K562 (cell line): ENCODE measurements at regions of chr10 and their contacts with region 1.

Region 1: GRCh38 chr10:71893920-71894319 is 42.9 kb upstream of the PSAP start:
- DNase-seq: peak; percentile 54 to 94 (median 73)
- ATAC-seq: peak; percentile 94
- H3K4me3 ChIP-seq: no peak overlapping the region
- H3K27ac ChIP-seq: no peak overlapping the region
- H3K4me1 ChIP-seq: peaks cover 21 to 28% of the 10 kb centered on the region in 2 experiments
- H3K27me3 ChIP-seq: no peaks in the 10 kb centered on the region
- CTCF ChIP-seq: no peak
- EP300 ChIP-seq: peak; percentile 91
- POLR2A ChIP-seq: no peak
- RAD21 ChIP-seq: peak in 1 of 2 experiments; percentile 39; a peak in 2 of 4 replicates

Region 2: GRCh38 chr10:71319042-71319799 is 574.7 kb before region 1 on chr10 and contains the start of gene SLC29A3:
- CTCF ChIA-PET with region 1: interaction called, 32 read pairs
- POLR2A ChIA-PET with region 1: no interaction called
- in situ Hi-C with region 1: no loop called
- intact Hi-C with region 1: loop called (anchors 1 kb)
- DNase-seq: peak; percentile 92 to 96 (median 94)
- ATAC-seq: peak; percentile 96
- H3K4me3 ChIP-seq: peak within 1 kb of the TSS; percentile 75
- H3K27ac ChIP-seq: peak within 1 kb of the TSS; percentile 62
- H3K4me1 ChIP-seq: peaks cover 10 to 23% of the 10 kb centered on the region in 2 experiments; a peak in 4 of 5 replicates
- H3K27me3 ChIP-seq: no peaks in the 10 kb centered on the region
- CTCF ChIP-seq: peak; percentile 90 to 96 (median 94)
- EP300 ChIP-seq: no peak
- POLR2A ChIP-seq: peak; percentile 80
- RAD21 ChIP-seq: peak; percentile 84 to 91
- polyA plus RNA-seq, gene SLC29A3: 6.3 to 10.3 TPM

Region 3: GRCh38 chr10:71569775-71570588 is 323.9 kb before region 1 on chr10:
- CTCF ChIA-PET with region 1: no interaction called
- POLR2A ChIA-PET with region 1: no interaction called
- in situ Hi-C with region 1: no loop called
- intact Hi-C with region 1: no loop called
- DNase-seq: peak; percentile 85 to 92 (median 88)
- ATAC-seq: peak; percentile 84
- H3K4me3 ChIP-seq: no peak overlapping the region
- H3K27ac ChIP-seq: no peak overlapping the region
- H3K4me1 ChIP-seq: peaks cover 0 to 19% of the 10 kb centered on the region in 2 experiments; a peak in 2 of 5 replicates
- H3K27me3 ChIP-seq: peaks cover 0 to 5% of the 10 kb centered on the region in 2 experiments; a peak in 3 of 5 replicates
- CTCF ChIP-seq: peak; percentile 88 to 93 (median 92)
- EP300 ChIP-seq: no peak
- POLR2A ChIP-seq: no peak
- RAD21 ChIP-seq: peak; percentile 87

Region 4: DNA sequence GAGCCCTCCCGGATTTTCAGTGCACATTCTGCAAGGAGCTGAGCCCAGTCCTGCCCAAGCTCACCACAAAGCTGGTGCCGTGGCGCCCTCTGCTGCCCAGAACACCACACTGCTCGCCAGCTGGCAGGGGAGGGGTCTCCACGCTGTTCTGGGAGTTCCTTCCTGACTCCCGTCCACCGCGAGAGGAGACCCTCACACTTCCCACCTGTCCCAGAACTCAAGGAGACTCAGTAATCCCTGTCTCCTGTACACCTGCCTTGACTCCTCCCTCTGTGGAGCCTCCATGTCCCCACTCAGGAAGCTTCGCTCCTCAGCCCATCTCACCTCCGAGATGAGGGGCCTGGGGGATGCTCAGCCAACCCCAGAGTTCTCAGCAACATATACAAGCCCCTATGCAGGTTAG is 185.6 kb before region 1 on chr10:
- CTCF ChIA-PET with region 1: interaction called, 4 read pairs
- POLR2A ChIA-PET with region 1: no interaction called
- in situ Hi-C with region 1: no loop called
- intact Hi-C with region 1: loop called (anchors 10 kb)
- DNase-seq: peak; percentile 80 to 83 (median 82)
- ATAC-seq: peak; percentile 90
- H3K4me3 ChIP-seq: no peak overlapping the region
- H3K27ac ChIP-seq: no peak overlapping the region
- H3K4me1 ChIP-seq: peaks cover 6 to 57% of the 10 kb centered on the region in 2 experiments
- H3K27me3 ChIP-seq: no peaks in the 10 kb centered on the region
- CTCF ChIP-seq: peak; percentile 93 to 99 (median 94)
- EP300 ChIP-seq: no peak
- POLR2A ChIP-seq: no peak
- RAD21 ChIP-seq: peak; percentile 81 to 97

Region 5: DNA sequence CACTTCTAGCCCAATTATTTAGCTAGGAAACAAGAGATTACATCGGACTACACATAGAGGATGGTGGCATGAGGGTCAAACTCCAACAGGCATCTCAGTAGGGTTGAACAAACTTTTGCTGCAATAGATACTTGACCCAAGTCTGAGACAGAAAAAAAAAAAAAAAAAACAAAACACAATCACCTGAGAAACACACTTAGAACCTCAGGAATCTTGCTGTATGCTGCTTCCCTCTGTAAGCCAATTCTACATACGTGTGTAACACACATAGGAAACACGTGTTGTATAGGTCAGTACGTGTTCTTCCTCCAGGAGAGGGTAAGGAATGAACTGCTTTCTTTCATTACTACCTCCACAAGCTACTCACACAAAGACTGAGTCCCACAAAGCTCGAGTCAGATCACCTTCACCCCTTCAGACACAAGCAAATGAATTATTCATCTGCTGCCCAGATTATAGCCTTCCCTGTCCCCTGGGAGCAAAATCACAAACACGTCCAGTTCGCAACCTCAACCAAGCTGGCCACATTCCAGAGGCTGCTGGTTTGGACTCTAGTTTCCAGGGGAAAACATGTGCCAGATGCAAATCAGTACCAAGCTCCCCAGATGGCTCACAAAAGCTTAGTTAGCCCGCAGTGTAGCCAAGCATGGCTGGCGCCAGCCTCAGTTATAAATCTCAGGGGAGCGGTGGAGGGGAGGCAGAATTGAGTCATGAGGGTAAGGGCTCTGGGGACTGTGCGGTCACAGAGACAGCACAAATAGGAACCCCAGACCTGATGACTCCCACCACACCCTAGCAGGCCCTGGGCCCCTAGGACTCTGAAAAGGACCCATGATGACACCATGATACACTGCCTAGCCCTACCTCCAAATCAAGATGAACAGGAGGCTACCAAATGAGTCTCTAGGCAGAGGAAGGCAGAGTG is 58.0 kb before region 1 on chr10:
- CTCF ChIA-PET with region 1: interaction called, 24 read pairs
- POLR2A ChIA-PET with region 1: interaction called, 6 read pairs
- in situ Hi-C with region 1: loop called (anchors 5 kb)
- intact Hi-C with region 1: loop called (anchors 1 kb)
- DNase-seq: no peak
- ATAC-seq: no peak
- H3K4me3 ChIP-seq: no peak overlapping the region
- H3K27ac ChIP-seq: no peak overlapping the region
- H3K4me1 ChIP-seq: peaks cover 23 to 40% of the 10 kb centered on the region in 2 experiments; a peak in 4 of 5 replicates
- H3K27me3 ChIP-seq: no peaks in the 10 kb centered on the region
- CTCF ChIP-seq: no peak
- EP300 ChIP-seq: no peak
- POLR2A ChIP-seq: no peak
- RAD21 ChIP-seq: no peak

Region 6: GRCh38 chr10:72331601-72332422 is 437.9 kb after region 1 on chr10:
- CTCF ChIA-PET with region 1: interaction called, 55 read pairs
- POLR2A ChIA-PET with region 1: interaction called, 3 read pairs
- in situ Hi-C with region 1: loop called (anchors 5 kb)
- intact Hi-C with region 1: loop called (anchors 1 kb)
- DNase-seq: peak in 1 of 4 experiments; percentile 26
- ATAC-seq: no peak
- H3K4me3 ChIP-seq: no peak overlapping the region
- H3K27ac ChIP-seq: no peak overlapping the region
- H3K4me1 ChIP-seq: peaks cover 18 to 44% of the 10 kb centered on the region in 2 experiments; a peak in 4 of 5 replicates
- H3K27me3 ChIP-seq: no peaks in the 10 kb centered on the region
- CTCF ChIP-seq: no peak
- EP300 ChIP-seq: no peak
- POLR2A ChIP-seq: peak; percentile 47
- RAD21 ChIP-seq: no peak

Region 7: GRCh38 chr10:73252445-73253224 is 1358.7 kb after region 1 on chr10 and contains the start of gene MRPS16:
- CTCF ChIA-PET with region 1: no interaction called
- POLR2A ChIA-PET with region 1: no interaction called
- in situ Hi-C with region 1: no loop called
- intact Hi-C with region 1: no loop called
- DNase-seq: peak; percentile 93 to 99 (median 95)
- ATAC-seq: peak; percentile 87
- H3K4me3 ChIP-seq: peak within 1 kb of the TSS; percentile 59
- H3K27ac ChIP-seq: peak within 1 kb of the TSS; percentile 89
- H3K4me1 ChIP-seq: peaks cover 7 to 28% of the 10 kb centered on the region in 2 experiments; a peak in 4 of 5 replicates
- H3K27me3 ChIP-seq: no peaks in the 10 kb centered on the region
- CTCF ChIP-seq: peak in 2 of 3 experiments; percentile 1 to 20; a peak in 2 of 6 replicates
- EP300 ChIP-seq: peak; percentile 52; the same call in 1 of the 2 replicates
- POLR2A ChIP-seq: peak; percentile 98
- RAD21 ChIP-seq: no peak
- polyA plus RNA-seq, gene MRPS16: 65.0 to 99.7 TPM